Endothelial cell of umbilical vein (primary cell): ENCODE measurements at regions of chr12 and their contacts with region 1.

Region 1: DNA sequence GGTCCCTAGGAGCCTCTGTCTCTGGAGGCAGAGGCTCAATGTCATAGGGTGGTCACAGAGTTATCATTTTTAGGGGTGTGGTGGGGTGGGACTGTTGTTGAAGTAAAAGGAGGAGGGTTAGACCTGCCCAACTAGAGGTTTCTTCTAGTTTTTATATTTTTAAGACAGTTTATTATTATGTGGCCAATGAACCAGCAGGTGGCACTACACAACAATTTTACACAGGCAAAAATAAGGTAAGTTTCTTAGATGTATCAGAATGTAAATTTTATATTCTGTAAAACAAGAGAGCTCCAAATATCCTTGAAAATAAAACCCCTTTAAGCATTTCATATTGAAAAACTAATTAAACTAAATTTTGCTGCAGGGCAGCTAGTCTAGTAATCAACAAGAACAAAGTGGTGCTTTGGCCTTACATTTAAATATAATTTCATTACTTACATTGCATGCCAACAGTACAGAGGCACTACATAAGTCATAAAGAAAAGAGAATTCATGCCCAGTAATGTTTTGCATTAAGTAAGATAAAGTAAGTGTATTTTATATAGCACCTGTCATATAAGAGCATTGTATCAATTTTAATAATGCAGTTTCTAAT is 22.2 kb upstream of the OVCH1 start:
- DNase-seq: peak; percentile 75
- H3K4me3 ChIP-seq: no peak overlapping the region
- H3K27ac ChIP-seq: no peak overlapping the region
- H3K4me1 ChIP-seq: no peaks in the 10 kb centered on the region
- H3K27me3 ChIP-seq: no peaks in the 10 kb centered on the region
- CTCF ChIP-seq: peak; percentile 21 to 33
- POLR2A ChIP-seq: no peak

Region 2: DNA sequence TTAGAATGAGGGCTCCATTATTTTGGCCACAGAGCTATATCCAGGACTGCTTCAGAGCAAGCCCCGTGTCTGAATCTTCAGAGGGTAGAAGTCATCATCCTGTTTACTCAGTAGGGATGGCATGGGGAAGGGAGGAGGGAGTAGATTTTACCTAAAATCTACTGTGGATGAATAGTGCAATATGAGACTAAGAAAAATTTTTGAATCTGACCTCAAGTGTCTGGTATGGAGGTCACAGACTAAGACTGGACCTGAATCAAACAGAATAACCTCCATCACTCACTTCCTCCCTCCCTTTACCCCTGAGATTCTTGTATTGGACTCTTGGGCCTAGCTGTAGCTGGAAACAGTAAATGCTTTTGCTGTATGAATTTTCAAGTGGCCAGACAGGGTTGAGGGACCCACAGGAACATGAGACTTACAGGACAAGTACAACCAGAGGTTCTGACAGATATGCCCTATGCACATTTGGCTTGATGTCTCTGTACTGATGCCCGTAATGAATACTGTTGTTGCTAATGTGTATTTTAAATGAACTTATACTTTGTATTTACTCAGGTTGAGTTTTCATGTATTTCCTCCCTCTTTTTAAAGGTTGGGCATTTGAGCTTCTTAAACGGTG is 1251.0 kb before region 1 on chr12:
- CTCF ChIA-PET with region 1: no interaction called
- POLR2A ChIA-PET with region 1: no interaction called
- dilution Hi-C with region 1: no loop called
- intact Hi-C with region 1: no loop called
- DNase-seq: no peak
- H3K4me3 ChIP-seq: no peak overlapping the region
- H3K27ac ChIP-seq: no peak overlapping the region
- H3K4me1 ChIP-seq: no peaks in the 10 kb centered on the region
- H3K27me3 ChIP-seq: no peaks in the 10 kb centered on the region
- CTCF ChIP-seq: no peak
- POLR2A ChIP-seq: no peak

Region 3: GRCh38 chr12:29073628-29074239 is 445.9 kb before region 1 on chr12:
- CTCF ChIA-PET with region 1: interaction called, 7 read pairs
- POLR2A ChIA-PET with region 1: no interaction called
- dilution Hi-C with region 1: no loop called
- intact Hi-C with region 1: loop called (anchors 2 kb)
- DNase-seq: peak; percentile 67
- H3K4me3 ChIP-seq: no peak overlapping the region
- H3K27ac ChIP-seq: no peak overlapping the region
- H3K4me1 ChIP-seq: no peaks in the 10 kb centered on the region
- H3K27me3 ChIP-seq: peaks cover 2 to 12% of the 10 kb centered on the region in 2 experiments
- CTCF ChIP-seq: peak; percentile 51 to 55
- POLR2A ChIP-seq: no peak

Region 4: GRCh38 chr12:29309320-29309902 is 210.3 kb before region 1 on chr12:
- CTCF ChIA-PET with region 1: no interaction called
- POLR2A ChIA-PET with region 1: no interaction called
- dilution Hi-C with region 1: no loop called
- intact Hi-C with region 1: loop called (anchors 10 kb)
- DNase-seq: peak; percentile 8
- H3K4me3 ChIP-seq: no peak overlapping the region
- H3K27ac ChIP-seq: no peak overlapping the region
- H3K4me1 ChIP-seq: no peaks in the 10 kb centered on the region
- H3K27me3 ChIP-seq: no peaks in the 10 kb centered on the region
- CTCF ChIP-seq: peak; percentile 5 to 12
- POLR2A ChIP-seq: no peak

Region 5: DNA sequence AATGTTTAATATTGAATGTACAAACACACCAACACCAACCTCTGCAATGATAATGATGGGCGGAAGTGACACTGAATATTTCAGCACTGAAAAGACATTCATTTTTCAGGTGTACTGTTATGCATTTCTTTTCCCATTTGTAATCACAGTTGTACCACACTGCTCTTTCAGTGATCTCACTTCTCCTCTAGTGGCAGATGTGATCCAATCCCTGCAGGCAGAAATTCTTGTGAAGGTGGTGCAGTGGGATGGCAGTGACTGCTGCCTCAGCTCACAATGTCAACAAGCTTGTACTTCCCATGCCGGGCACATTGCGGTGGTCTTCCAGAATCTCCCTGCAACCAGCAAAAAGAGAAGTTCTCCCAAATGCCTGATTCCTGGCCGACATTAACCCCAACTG is 115.7 kb before region 1 on chr12:
- CTCF ChIA-PET with region 1: no interaction called
- POLR2A ChIA-PET with region 1: no interaction called
- dilution Hi-C with region 1: no loop called
- intact Hi-C with region 1: no loop called
- DNase-seq: no peak
- H3K4me3 ChIP-seq: no peak overlapping the region
- H3K27ac ChIP-seq: no peak overlapping the region
- H3K4me1 ChIP-seq: no peaks in the 10 kb centered on the region
- H3K27me3 ChIP-seq: no peaks in the 10 kb centered on the region
- CTCF ChIP-seq: no peak
- POLR2A ChIP-seq: no peak

Region 6: DNA sequence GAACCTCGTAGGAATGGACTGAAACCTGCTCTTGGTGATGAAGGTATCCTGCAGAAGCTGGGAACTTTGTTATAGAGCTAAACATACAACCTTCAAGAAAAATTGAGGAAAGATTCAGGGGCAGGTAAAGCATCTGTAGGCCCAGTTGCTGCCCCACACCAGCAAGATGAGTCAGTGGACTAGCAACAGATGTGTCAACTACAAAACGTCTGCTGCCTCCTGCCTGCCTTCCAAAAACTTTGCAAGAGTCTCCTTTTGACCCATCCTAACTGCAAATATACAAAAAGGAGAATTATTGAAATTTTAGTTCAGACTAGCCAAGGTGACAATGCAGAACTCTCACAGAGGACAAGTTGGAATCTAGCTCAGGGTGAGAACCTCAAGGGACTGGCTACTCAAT is 325.0 kb after region 1 on chr12:
- CTCF ChIA-PET with region 1: no interaction called
- POLR2A ChIA-PET with region 1: no interaction called
- dilution Hi-C with region 1: no loop called
- intact Hi-C with region 1: no loop called
- DNase-seq: no peak
- H3K4me3 ChIP-seq: no peak overlapping the region
- H3K27ac ChIP-seq: no peak overlapping the region
- H3K4me1 ChIP-seq: no peaks in the 10 kb centered on the region
- H3K27me3 ChIP-seq: no peaks in the 10 kb centered on the region
- CTCF ChIP-seq: no peak
- POLR2A ChIP-seq: no peak

Region 7: DNA sequence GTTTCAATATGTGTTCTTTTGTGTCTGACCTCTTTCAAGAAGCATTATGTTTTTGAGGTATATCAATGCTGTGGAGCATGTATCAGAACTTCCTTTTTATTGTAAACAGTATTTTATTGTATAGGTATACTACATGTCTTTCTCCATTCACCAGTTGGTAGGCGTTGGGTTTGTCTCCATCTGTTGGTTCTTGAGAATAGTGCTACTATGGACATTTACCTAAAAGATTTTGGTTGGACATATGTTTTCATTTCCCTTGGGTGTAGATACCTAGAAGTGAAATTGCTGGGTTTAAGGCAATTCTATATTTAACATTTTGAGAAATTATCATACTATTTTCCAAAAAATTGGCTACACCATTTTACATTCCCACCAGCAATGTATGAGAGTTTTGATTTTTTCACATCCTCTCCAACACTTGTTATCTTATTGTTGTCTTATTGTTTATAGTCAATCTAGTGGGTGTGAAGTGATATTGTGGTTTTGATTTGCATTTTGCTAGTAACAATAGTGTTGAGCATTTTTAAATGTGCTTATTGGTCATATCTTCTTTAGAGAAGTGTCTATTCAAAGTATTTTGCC is 766.8 kb after region 1 on chr12:
- CTCF ChIA-PET with region 1: interaction called, 12 read pairs
- POLR2A ChIA-PET with region 1: no interaction called
- dilution Hi-C with region 1: no loop called
- intact Hi-C with region 1: loop called (anchors 1 kb)
- DNase-seq: peak; percentile 64
- H3K4me3 ChIP-seq: no peak overlapping the region
- H3K27ac ChIP-seq: no peak overlapping the region
- H3K4me1 ChIP-seq: no peaks in the 10 kb centered on the region
- H3K27me3 ChIP-seq: peaks cover 4 to 5% of the 10 kb centered on the region in 2 experiments
- CTCF ChIP-seq: peak; percentile 40 to 48
- POLR2A ChIP-seq: no peak

Region 8: GRCh38 chr12:30515351-30515750 is 995.7 kb after region 1 on chr12:
- CTCF ChIA-PET with region 1: interaction called, 5 read pairs
- POLR2A ChIA-PET with region 1: no interaction called
- dilution Hi-C with region 1: no loop called
- intact Hi-C with region 1: loop called (anchors 1 kb)
- DNase-seq: peak; percentile 26
- H3K4me3 ChIP-seq: no peak overlapping the region
- H3K27ac ChIP-seq: no peak overlapping the region
- H3K4me1 ChIP-seq: no peaks in the 10 kb centered on the region
- H3K27me3 ChIP-seq: no peaks in the 10 kb centered on the region
- CTCF ChIP-seq: peak in 1 of 2 donors; percentile 5
- POLR2A ChIP-seq: no peak